Ascending aorta (tissue), 2 donors: ENCODE measurements at regions of chr10 and their contacts with region 1.

Region 1: DNA sequence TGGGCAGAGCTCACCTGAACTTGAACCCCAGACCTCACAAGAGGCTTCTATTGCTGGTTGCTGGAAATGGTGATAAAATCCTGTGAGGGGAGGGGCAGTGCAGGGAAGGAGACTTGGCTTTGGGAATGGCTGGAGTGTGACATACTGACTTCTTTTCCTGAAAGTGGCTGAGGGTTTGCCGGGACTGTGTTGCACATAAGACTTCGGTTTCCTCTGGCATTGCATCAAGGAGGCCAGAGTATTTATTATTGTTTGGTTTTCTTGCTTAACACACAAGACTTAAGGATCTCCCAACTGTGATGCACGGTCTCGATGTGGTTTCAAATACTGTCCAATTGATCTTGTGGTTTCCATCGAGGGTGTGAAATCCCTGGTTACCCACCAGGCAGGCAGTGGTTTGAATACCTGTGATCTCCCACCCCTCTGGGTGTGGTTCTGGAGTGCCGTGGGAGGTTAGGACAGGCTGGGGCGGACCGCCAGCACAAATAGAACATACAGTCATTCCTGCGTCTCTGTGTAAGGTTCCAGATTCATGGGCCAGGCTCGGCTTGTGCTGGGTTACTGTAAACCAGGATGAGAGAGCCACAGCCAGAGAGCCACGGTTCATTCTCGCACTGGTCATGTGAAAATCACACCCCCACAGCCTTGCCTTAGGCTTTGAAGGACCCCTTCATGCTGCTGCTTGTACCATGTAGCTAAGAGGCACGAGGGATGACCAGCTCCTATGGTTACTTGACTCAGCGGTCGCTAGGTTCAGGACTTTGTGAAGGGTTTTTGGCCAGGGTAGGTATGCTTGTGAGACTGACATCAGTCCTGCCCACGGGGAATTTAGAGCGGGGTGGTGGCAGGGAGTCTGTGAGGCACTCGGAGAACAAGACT is 39.2 kb downstream of the WBP1L start:
- DNase-seq: peak; percentile 62 to 95
- H3K4me3 ChIP-seq: peak overlapping the region; percentile 28 to 35
- H3K27ac ChIP-seq: peak overlapping the region; percentile 94 to 95
- H3K4me1 ChIP-seq: peaks cover 39 to 86% of the 10 kb centered on the region in 2 donors
- H3K27me3 ChIP-seq: no peaks in the 10 kb centered on the region
- CTCF ChIP-seq: no peak

Region 2: DNA sequence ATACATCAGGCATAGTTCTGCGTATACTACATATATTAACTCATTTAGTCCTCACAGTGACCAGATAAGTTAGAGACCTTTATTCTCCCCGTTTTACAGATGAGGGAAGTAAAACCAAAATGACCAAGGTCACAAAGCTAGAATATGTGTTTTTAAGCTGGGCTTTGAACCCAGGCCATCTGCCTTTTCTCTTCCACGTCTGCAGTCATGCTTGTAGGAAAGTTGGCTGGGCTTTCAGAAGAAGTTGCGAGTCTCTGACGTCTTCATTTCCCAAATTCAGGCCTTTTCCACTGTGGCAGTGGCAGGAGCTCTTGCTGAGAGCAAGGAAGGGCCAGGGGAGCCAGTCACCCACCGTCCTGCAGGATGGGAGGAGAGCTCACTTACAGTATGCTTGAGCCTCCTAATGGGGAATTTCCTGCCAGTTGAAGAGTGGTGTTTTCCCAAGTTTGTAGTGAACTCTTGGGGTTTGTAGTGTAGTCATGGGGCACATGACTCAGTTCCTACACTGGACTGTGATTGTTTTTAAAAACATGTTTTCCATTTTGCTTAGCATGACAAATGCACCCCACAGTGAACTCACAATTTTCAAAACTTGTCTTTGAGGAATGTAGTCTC is 20.1 kb after region 1 on chr10:
- intact Hi-C with region 1: loop called (anchors 2 kb)
- DNase-seq: peak in 1 of 2 donors; percentile 90
- H3K4me3 ChIP-seq: no peak overlapping the region
- H3K27ac ChIP-seq: peak overlapping the region; percentile 85 to 88
- H3K4me1 ChIP-seq: peaks cover 26 to 45% of the 10 kb centered on the region in 2 donors
- H3K27me3 ChIP-seq: no peaks in the 10 kb centered on the region
- CTCF ChIP-seq: no peak